ENCODE measurements at regions of chr6 and their contacts with region 1.

Region 1: GRCh38 chr6:132215805-132216204 is 185.5 kb downstream of the MOXD1 start:
- DNase-seq: no peak

Region 2: DNA sequence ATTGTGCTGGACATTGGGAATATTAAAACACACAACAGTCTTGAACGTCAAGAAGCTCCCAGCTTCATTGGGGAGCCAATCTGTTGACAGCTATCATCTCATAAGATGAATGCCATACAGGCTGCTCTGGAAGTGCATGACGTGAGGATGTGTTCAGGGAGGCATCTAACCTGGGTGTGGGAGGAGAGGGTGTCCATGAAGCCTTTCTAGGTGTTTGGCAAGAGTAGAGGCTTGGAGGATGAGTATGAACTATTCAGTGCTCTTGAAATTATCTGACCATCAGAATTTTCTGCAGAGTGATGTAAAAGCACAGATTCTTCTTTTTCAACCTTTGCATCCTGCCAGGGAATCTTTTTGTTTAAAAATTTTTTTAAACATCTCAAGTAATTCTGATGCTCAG is 1068.9 kb before region 1 on chr6:
- intact Hi-C with region 1: no loop called
- DNase-seq: no peak

Region 3: DNA sequence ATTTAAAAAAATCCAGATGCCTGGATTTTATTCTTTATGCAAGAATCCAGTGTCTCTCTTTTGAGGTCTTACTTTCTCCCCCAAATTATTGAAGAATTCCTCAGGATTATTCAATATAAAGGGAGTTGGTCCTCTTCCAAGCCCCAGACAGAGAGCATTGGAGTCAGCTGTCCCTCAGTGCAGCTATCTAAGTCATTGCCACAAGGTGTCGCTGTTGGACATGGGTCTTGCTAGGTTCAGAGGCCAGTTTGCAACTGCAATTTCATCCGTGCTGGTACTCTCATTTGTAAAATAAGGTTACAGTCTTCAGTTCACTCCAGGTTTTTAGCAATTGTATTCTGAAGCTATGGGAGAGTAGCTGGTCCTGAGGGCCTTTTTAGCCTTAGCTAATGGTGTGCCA is 292.4 kb before region 1 on chr6:
- intact Hi-C with region 1: loop called (anchors 2 kb)
- DNase-seq: no peak

Region 4: GRCh38 chr6:132648356-132649227 is 432.8 kb after region 1 on chr6:
- intact Hi-C with region 1: no loop called
- DNase-seq: no peak

Measured in cardiac septum (tissue), 1 donor.